Panc1 (cell line): ENCODE measurements at regions of chr9 and their contacts with region 1.

Region 1: GRCh38 chr9:104494808-104495207 is 9.3 kb upstream of the OR13F1 start:
- DNase-seq: no peak
- ATAC-seq: no peak
- H3K4me3 ChIP-seq: no peak overlapping the region
- H3K27ac ChIP-seq: no peak overlapping the region
- H3K4me1 ChIP-seq: no peaks in the 10 kb centered on the region
- H3K27me3 ChIP-seq: no peaks in the 10 kb centered on the region
- CTCF ChIP-seq: peak; percentile 28; the same call in 1 of the 2 replicates

Region 2: GRCh38 chr9:104575456-104575855 is 80.6 kb after region 1 on chr9:
- CTCF ChIA-PET with region 1: no interaction called
- POLR2A ChIA-PET with region 1: no interaction called
- in situ Hi-C with region 1: no loop called
- intact Hi-C with region 1: no loop called
- DNase-seq: no peak
- ATAC-seq: no peak
- H3K4me3 ChIP-seq: no peak overlapping the region
- H3K27ac ChIP-seq: no peak overlapping the region
- H3K4me1 ChIP-seq: no peaks in the 10 kb centered on the region
- H3K27me3 ChIP-seq: no peaks in the 10 kb centered on the region
- CTCF ChIP-seq: no peak

Region 3: GRCh38 chr9:104743376-104743985 is 248.7 kb after region 1 on chr9:
- CTCF ChIA-PET with region 1: no interaction called
- POLR2A ChIA-PET with region 1: no interaction called
- in situ Hi-C with region 1: no loop called
- intact Hi-C with region 1: loop called (anchors 2 kb)
- DNase-seq: peak; percentile 48
- ATAC-seq: peak; percentile 49; the same call in 1 of the 2 replicates
- H3K4me3 ChIP-seq: no peak overlapping the region
- H3K27ac ChIP-seq: no peak overlapping the region
- H3K4me1 ChIP-seq: peaks cover under 1% of the 10 kb centered on the region; the same call in 1 of the 2 replicates
- H3K27me3 ChIP-seq: no peaks in the 10 kb centered on the region
- CTCF ChIP-seq: peak; percentile 63